Left cardiac atrium (tissue), 4 donors: ENCODE measurements at regions of chr16 and their contacts with region 1.

Region 1: DNA sequence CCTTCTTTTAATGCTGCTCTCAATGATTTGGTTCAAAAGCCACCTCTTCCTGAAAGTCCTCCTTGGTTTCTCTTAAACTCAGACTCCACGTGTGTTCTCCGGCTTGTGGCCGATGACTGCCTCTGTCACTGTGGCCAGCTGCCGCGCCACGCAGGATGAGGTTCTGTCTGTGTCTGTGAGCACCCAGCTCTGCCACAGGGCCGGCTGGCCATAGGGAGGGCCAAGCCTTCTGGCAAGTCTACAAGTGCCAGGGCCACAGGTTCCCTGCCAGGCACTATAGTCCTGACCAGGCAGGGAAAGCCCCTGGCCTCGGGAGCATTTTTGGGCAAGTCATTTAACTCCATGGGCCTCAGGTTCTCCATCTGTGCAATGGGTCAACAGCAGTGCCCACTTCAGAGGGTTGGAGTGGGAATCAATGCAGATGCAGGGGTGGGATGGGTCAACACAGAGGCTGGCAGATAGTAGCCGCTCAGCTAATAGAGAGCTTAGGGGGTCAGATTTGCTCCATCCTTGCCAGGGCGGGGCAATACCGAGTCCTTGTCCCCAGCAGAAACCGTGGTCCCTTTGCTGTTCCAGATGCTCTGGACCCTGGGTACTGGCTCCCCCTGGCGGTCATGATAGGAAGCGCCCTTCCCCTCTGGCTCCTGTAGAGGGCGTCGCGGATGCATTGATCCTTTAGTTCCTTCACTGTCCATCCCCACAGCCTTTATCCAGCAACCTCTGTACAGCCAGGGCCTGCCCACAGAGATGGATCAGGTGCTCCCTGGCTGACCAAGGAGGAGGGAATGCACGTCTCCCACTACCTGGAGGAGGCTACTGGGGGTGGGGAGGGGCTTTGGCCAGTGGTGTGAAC is 19.3 kb upstream of the ADGRG3 start:
- DNase-seq: peak; percentile 75
- ATAC-seq: peak; percentile 58 to 69

Region 2: DNA sequence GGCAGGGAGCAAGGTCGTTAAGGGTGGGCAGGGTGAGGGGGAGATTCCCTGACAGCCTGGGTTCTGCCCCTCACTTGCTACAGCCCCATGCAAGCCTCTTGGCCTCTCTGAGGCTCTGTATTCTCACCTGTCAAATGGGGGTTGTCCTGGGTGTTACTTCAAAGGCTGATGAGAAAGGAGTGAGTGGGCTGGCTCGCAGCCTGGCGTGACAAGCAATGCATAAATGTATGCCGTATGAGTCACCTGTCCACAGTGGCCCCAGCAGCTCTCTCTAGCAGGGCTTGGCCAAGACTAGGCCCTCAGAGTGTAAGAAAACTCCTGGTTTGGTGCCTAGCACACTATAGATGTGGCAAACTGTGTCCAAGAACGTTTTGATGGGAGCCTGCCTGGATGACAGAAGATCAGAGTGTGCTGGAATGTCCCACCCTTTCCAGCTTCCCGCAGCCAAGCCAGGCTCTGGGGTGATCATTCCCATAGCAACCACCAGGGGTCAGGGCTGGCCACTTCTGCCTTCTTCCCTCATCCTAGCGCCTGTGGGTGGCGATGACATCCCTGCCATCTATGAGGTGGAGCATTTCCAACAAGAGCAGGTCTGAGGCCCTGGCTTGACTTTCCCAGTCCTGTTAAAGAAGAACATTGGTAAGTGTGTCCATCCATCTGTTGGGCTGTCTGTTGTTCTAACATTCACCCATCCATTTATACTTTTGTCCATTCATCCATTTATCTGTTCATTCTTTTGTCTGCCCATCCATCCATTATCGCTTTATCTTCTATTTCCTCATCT is 57.5 kb before region 1 on chr16:
- intact Hi-C with region 1: loop called in 1 of 2 experiments (anchors 2 kb)
- DNase-seq: peak; percentile 75
- ATAC-seq: peak; percentile 90 to 91

Region 3: GRCh38 chr16:57600048-57600835 is 48.6 kb before region 1 on chr16:
- intact Hi-C with region 1: loop called (anchors 2 to 5 kb)
- DNase-seq: peak; percentile 59
- ATAC-seq: peak; percentile 78 to 90